RWPE1 (cell line): ENCODE measurements at regions of chr11 and their contacts with region 1.

Region 1: GRCh38 chr11:82959987-82960778 is 58.6 kb downstream of the DDIAS start:
- DNase-seq: no peak
- H3K27ac ChIP-seq: no peak overlapping the region
- CTCF ChIP-seq: no peak

Region 2: DNA sequence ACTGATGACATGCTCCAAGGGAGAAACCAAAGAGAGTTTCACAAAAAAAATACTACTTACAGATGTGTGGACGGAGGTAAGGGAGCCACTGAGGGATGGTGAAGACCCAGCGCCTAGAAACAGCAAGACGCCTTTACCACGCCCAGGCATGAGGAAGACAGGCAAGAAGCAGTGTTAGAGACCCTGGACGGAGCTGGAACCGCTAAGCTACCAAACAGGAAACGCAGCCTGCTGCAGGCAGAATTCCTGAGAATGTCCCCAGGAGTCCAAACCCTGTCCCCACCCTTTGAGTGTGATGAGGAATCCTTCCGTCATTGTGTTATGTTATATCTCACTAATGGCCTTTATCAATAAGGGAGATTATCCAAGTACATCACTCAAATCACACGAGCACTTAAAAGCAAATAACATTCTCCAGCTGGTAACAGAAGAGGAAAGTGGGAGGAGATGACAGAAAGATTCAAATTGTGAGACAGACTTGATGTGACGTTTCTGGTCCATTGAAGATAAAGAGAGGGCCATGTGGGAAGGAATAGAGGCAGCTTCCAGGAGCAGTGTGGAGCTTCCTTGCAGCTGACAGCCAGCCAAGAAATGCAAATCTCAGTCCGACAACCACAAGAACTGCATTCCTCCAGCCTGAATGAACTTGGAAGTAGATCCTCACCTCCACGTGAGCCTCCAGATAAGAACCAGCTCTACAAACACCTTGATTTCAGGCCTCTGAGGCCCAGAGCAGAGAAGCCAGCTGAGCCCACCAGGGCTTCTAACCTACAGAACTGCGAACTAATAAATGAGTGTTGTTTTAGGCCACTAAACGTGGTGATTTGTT is 245.6 kb before region 1 on chr11:
- CTCF ChIA-PET with region 1: interaction called, 11 read pairs
- POLR2A ChIA-PET with region 1: no interaction called
- DNase-seq: no peak
- H3K27ac ChIP-seq: no peak overlapping the region
- CTCF ChIP-seq: no peak

Region 3: GRCh38 chr11:82823647-82824619 is 136.2 kb before region 1 on chr11:
- CTCF ChIA-PET with region 1: no interaction called
- POLR2A ChIA-PET with region 1: no interaction called
- DNase-seq: no peak
- H3K27ac ChIP-seq: no peak overlapping the region
- CTCF ChIP-seq: no peak

Region 4: DNA sequence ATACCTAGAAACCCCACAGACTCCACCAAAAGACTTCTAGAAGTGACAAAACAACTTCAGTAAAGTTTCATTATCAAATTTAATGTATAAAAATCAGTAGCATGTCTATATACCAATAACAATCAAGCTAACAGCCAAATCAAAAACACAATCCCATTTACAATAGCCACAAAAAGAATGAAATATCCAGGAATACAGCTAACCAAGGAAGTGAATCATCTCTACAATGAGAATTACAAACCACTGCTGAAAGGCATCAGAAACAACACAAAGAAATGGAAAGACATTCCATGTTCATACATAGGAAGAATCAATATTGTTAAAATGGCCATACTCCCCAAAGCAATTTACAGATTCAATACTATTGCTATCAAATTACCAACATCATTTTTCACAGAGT is 105.9 kb before region 1 on chr11:
- CTCF ChIA-PET with region 1: no interaction called
- POLR2A ChIA-PET with region 1: no interaction called
- DNase-seq: no peak
- H3K27ac ChIP-seq: no peak overlapping the region
- CTCF ChIP-seq: no peak

Region 5: DNA sequence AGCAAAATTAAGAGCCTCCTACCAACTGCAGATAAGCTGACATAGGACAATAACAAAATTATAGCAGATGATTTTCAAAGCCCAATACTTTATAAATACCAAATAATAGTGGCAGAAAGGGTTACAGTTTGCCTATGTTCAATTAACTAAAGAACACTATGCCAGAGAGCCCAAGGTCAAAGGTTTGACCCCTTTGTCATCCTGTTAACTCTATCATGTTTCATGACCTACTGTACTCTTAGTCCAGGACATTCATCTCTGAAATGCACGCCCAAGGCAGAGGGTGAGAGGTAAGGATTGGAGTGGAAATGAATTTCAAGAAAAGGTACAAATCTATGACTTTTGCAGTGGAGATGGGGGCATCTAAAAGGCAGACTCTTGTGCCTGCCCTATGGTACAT is 11.9 kb after region 1 on chr11:
- CTCF ChIA-PET with region 1: no interaction called
- POLR2A ChIA-PET with region 1: no interaction called
- DNase-seq: no peak
- H3K27ac ChIP-seq: no peak overlapping the region
- CTCF ChIP-seq: no peak

Region 6: GRCh38 chr11:83087035-83087434 is 126.9 kb after region 1 on chr11:
- CTCF ChIA-PET with region 1: interaction called, 11 read pairs
- POLR2A ChIA-PET with region 1: no interaction called
- DNase-seq: peak; percentile 25
- H3K27ac ChIP-seq: no peak overlapping the region
- CTCF ChIP-seq: peak; percentile 23; the same call in 1 of the 2 replicates